Activated CD4-positive, alpha-beta T cell treated with anti-CD3 and anti-CD28 coated beads, Interleukin-2, amount 10 ng/mL, durations not matched to agents 24 days and 14 days (primary cell): ENCODE measurements at regions of chr1 and their contacts with region 1.

Region 1: GRCh38 chr1:9292361-9293240 is at the start of gene SPSB1:
- DNase-seq: peak; percentile 87
- H3K4me3 Mint-ChIP-seq: peak within 1 kb of the TSS; percentile 32
- H3K27ac Mint-ChIP-seq: no peak within 1 kb of the TSS
- H3K4me1 Mint-ChIP-seq: peaks cover 19% of the 10 kb centered on the region
- H3K27me3 Mint-ChIP-seq: peaks cover 2% of the 10 kb centered on the region
- total RNA-seq, gene SPSB1: 4.8 and 6.2 TPM in 2 replicates

Region 2: DNA sequence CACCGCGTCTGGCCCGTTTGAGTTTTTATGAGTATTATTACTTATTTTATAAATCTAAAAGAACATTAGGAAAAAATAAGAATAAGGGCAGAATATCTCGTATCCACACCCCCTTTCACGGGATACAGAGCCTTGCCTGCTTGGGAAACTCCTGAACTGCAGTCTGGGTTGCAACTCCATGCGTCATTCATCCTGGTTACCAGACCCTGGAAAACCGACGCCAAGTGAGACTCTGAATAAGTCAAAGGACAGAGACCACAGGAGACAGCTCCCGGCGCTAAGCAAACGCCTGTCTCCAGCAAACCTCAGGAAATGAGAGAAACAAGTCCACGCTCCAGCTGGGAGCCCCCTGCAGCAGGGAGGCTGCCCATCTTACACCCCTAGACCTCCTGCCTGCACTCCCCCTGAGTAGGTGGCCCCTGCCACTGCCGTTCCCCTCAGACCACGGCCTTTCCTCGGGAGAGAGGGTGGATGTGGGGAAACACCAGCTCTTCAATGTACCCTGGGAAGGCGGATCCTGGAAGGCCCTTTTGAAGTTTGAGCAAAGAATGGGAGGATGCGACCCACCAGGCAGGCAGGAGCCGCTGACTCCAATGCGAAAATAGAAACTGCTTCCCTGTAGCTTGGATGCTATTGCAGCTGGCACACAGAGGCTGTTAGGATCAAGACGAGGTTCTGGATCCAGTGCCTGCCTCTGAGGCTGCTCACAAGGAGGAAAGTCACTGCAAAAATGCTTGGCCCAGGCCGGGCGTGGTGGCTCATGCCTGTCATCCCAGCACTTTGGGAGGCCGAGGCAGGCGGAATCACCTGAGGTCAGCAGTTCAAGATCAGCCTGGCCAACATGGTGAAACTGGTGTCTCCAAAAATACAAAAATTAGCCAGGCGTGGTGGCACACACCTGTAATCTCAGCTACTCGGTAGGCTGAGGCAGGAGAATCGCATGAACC is 126.0 kb before region 1 on chr1:
- intact Hi-C with region 1: no loop called
- DNase-seq: no peak
- H3K4me3 Mint-ChIP-seq: no peak overlapping the region
- H3K27ac Mint-ChIP-seq: no peak overlapping the region
- H3K4me1 Mint-ChIP-seq: peaks cover 19% of the 10 kb centered on the region
- H3K27me3 Mint-ChIP-seq: no peaks in the 10 kb centered on the region

Region 3: DNA sequence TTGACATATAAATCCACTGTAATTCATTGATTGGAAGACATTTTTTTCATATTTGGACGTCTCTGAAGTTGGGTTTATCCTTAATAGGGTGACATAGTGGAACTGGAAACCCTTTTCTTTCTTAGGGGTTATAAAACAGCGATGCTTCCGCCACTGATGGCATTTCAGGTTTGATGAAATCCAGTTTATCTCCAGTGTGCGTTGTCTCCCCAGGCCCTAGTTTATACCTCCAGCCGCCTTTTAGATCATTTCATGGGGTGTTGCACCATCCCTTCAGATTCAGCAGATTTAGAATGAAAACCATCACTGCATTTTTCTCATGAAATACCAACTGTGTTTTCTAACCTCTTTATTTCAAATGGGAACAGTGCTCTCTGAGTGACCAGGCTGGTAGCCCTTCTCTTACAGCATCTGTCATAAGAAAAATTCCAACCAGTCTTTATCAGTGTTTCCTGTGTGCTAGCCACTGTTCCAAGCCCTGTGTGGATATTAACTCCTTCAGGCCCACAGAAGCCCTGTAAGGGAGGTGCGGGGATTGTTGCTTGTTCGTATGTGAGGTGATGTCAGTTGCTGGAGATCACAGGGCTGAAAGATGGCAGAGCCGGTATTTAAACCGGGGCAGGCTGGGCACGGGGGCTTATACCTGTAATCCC is 39.0 kb before region 1 on chr1:
- intact Hi-C with region 1: no loop called
- DNase-seq: no peak
- H3K4me3 Mint-ChIP-seq: no peak overlapping the region
- H3K27ac Mint-ChIP-seq: no peak overlapping the region
- H3K4me1 Mint-ChIP-seq: peaks cover 9% of the 10 kb centered on the region
- H3K27me3 Mint-ChIP-seq: no peaks in the 10 kb centered on the region

Region 4: GRCh38 chr1:9269078-9269501 is 23.5 kb before region 1 on chr1:
- intact Hi-C with region 1: loop called (anchors 2 kb)
- DNase-seq: no peak
- H3K4me3 Mint-ChIP-seq: no peak overlapping the region
- H3K27ac Mint-ChIP-seq: no peak overlapping the region
- H3K4me1 Mint-ChIP-seq: peaks cover 10% of the 10 kb centered on the region
- H3K27me3 Mint-ChIP-seq: no peaks in the 10 kb centered on the region

Region 5: GRCh38 chr1:9275567-9276034 is 17.0 kb before region 1 on chr1:
- intact Hi-C with region 1: loop called (anchors 2 kb)
- DNase-seq: peak; percentile 86
- H3K4me3 Mint-ChIP-seq: peak overlapping the region; percentile 20
- H3K27ac Mint-ChIP-seq: peak overlapping the region; percentile 2
- H3K4me1 Mint-ChIP-seq: peaks cover 31% of the 10 kb centered on the region
- H3K27me3 Mint-ChIP-seq: no peaks in the 10 kb centered on the region

Region 6: GRCh38 chr1:9317591-9318417 is 25.2 kb after region 1 on chr1:
- intact Hi-C with region 1: loop called (anchors 1 kb)
- DNase-seq: peak; percentile 62
- H3K4me3 Mint-ChIP-seq: peak overlapping the region; percentile 40
- H3K27ac Mint-ChIP-seq: peak overlapping the region; percentile 68
- H3K4me1 Mint-ChIP-seq: peaks cover 50% of the 10 kb centered on the region
- H3K27me3 Mint-ChIP-seq: no peaks in the 10 kb centered on the region

Region 7: DNA sequence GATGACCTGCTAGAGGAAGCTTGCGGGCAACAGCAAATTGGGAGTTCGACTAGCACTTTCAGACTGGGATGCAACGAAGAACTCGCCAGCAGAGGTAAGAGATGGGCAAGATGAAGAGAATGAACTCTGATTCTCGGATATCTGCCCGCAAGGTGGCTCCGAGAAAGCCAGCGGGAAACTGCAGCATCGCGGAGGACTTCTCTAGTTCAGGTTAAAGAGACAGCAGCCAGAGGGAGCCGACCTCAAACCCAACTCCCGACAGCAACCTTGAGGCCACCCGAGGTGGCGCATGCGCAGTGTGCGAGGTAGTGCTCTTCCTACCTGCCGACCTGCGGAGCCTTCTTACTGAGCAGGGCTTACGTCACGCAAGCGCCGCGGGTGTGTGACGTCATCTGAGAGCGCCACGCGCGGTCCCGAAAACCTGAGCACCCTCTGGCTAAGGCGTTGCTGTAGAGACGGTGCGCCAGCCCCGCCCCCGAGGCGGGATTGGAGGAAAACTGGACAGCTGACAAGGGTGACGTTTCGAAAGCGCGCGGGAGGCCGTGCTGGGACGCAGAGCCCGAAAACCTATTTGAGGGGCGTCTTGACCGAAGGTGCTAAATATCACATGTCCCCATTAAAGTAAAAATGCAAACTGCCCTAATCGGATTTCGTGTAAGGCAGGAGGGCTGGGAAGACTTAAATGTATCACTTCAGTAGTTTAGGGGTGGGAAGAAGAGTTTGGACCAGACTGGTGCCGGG is 136.2 kb after region 1 on chr1:
- intact Hi-C with region 1: loop called (anchors 5 kb)
- DNase-seq: peak; percentile 100
- H3K4me3 Mint-ChIP-seq: peak overlapping the region; percentile 97
- H3K27ac Mint-ChIP-seq: peak overlapping the region; percentile 97
- H3K4me1 Mint-ChIP-seq: peaks cover 45% of the 10 kb centered on the region
- H3K27me3 Mint-ChIP-seq: peaks cover 13% of the 10 kb centered on the region

Region 8: GRCh38 chr1:9455487-9456234 is 163.1 kb after region 1 on chr1:
- intact Hi-C with region 1: loop called (anchors 1 kb)
- DNase-seq: peak; percentile 89
- H3K4me3 Mint-ChIP-seq: no peak overlapping the region
- H3K27ac Mint-ChIP-seq: no peak overlapping the region
- H3K4me1 Mint-ChIP-seq: no peaks in the 10 kb centered on the region
- H3K27me3 Mint-ChIP-seq: peaks cover 16% of the 10 kb centered on the region

Region 9: GRCh38 chr1:9494929-9495758 is 202.5 kb after region 1 on chr1:
- intact Hi-C with region 1: loop called (anchors 1 kb)
- DNase-seq: peak; percentile 92
- H3K4me3 Mint-ChIP-seq: peak overlapping the region; percentile 77
- H3K27ac Mint-ChIP-seq: no peak overlapping the region
- H3K4me1 Mint-ChIP-seq: peaks cover 10% of the 10 kb centered on the region
- H3K27me3 Mint-ChIP-seq: peaks cover 11% of the 10 kb centered on the region

Region 10: GRCh38 chr1:9784508-9785133 is 492.0 kb after region 1 on chr1:
- intact Hi-C with region 1: no loop called
- DNase-seq: peak; percentile 90
- H3K4me3 Mint-ChIP-seq: no peak overlapping the region
- H3K27ac Mint-ChIP-seq: no peak overlapping the region
- H3K4me1 Mint-ChIP-seq: peaks cover 28% of the 10 kb centered on the region
- H3K27me3 Mint-ChIP-seq: no peaks in the 10 kb centered on the region